Calu3 (cell line): ENCODE measurements at regions of chr5 and their contacts with region 1.

Region 1: GRCh38 chr5:172777881-172778814 is 7.2 kb upstream of the DUSP1 start:
- DNase-seq: peak; percentile 90
- H3K4me3 Mint-ChIP-seq: peak overlapping the region; percentile 68
- H3K27ac Mint-ChIP-seq: peak overlapping the region; percentile 98
- H3K4me1 Mint-ChIP-seq: peaks cover 51% of the 10 kb centered on the region
- H3K27me3 Mint-ChIP-seq: no peaks in the 10 kb centered on the region
- CTCF ChIP-seq: no peak

Region 2: DNA sequence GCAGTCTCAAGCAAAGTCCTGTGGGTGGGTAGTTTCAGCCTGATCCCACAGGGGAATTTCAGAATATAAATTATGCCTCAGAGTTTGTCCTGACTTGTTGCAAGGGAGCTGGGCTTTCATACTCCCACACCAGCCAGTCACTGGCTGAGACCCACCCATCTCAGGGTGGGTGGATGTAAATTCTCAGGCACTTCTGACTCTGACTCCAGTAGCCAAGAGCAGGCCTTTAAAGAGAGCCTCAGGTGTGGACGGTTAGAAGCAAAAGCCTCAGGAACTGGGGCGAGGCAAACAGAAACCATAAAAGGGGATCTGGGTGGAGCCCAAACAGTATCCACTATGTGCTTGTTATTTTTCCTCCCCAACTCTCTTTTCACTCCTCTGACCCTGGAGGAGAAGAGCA is 743.1 kb before region 1 on chr5:
- CTCF ChIA-PET with region 1: no interaction called
- intact Hi-C with region 1: no loop called
- DNase-seq: no peak
- H3K4me3 Mint-ChIP-seq: no peak overlapping the region
- H3K27ac Mint-ChIP-seq: no peak overlapping the region
- H3K4me1 Mint-ChIP-seq: peaks cover 4% of the 10 kb centered on the region
- H3K27me3 Mint-ChIP-seq: peaks cover 16% of the 10 kb centered on the region
- CTCF ChIP-seq: no peak

Region 3: DNA sequence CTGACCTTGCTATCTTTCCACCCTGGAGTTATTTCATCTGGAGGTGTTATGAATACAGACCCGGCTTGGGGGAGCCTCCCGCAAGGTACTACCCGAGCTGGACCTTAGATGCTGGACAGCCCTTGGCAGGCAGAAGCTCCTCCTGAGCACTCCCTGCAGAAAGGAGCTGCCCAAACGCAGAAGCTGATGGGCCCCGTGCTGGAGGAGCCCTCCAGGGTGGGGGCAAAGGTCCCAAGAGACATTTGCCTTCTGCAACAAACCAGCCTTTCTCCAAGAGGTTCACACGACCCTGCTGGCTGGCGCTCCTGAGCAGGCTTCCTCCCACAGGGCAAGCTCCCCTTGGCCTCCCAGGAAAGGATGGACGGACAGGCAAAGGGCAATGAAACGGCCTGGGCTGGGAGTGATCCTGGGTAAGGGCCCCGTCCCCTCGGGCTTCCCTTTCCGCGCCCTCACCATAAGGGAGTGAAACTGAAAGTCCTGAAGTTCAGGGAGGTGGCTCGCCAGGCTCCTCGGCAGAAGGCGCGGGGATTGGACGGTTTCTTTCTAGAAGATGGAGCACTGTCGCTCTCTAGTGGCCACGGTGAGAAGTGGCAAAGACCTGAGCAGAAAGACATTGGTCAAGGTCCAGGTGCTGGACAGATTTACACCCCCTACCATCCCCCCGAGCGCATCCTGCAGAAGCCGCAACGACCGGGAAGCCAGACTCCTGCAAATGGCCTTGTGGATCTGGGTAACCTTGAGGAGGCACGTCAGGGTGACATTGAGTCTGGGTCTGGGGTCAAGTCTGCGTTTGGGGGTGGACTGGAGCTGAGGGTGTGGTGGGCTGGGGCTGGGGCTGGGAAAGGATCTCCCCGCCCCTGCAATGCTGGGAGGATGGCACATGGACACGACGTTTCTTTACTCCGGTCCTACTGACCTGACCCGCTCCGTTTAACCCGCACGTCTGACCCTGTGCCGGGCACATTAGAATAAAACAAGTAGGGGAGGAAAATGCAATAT is 80.7 kb before region 1 on chr5:
- CTCF ChIA-PET with region 1: no interaction called
- intact Hi-C with region 1: no loop called
- DNase-seq: peak; percentile 92
- H3K4me3 Mint-ChIP-seq: peak overlapping the region; percentile 77
- H3K27ac Mint-ChIP-seq: peak overlapping the region; percentile 55
- H3K4me1 Mint-ChIP-seq: peaks cover 10% of the 10 kb centered on the region
- H3K27me3 Mint-ChIP-seq: peaks cover 36% of the 10 kb centered on the region
- CTCF ChIP-seq: peak; percentile 86

Region 4: GRCh38 chr5:172733131-172733973 is 44.8 kb before region 1 on chr5:
- CTCF ChIA-PET with region 1: no interaction called
- intact Hi-C with region 1: no loop called
- DNase-seq: peak; percentile 64
- H3K4me3 Mint-ChIP-seq: peak overlapping the region; percentile 1
- H3K27ac Mint-ChIP-seq: peak overlapping the region; percentile 78
- H3K4me1 Mint-ChIP-seq: peaks cover 38% of the 10 kb centered on the region
- H3K27me3 Mint-ChIP-seq: no peaks in the 10 kb centered on the region
- CTCF ChIP-seq: no peak

Region 5: GRCh38 chr5:172798422-172799200 is 20.5 kb after region 1 on chr5:
- CTCF ChIA-PET with region 1: interaction called, 33 read pairs
- intact Hi-C with region 1: loop called (anchors 1 kb)
- DNase-seq: no peak
- H3K4me3 Mint-ChIP-seq: peak overlapping the region; percentile 47
- H3K27ac Mint-ChIP-seq: peak overlapping the region; percentile 69
- H3K4me1 Mint-ChIP-seq: peaks cover 61% of the 10 kb centered on the region
- H3K27me3 Mint-ChIP-seq: no peaks in the 10 kb centered on the region
- CTCF ChIP-seq: no peak

Region 6: GRCh38 chr5:172806897-172807672 is 28.9 kb after region 1 on chr5:
- CTCF ChIA-PET with region 1: interaction called, 27 read pairs
- intact Hi-C with region 1: loop called (anchors 2 kb)
- DNase-seq: peak; percentile 95
- H3K4me3 Mint-ChIP-seq: peak overlapping the region; percentile 68
- H3K27ac Mint-ChIP-seq: peak overlapping the region; percentile 100
- H3K4me1 Mint-ChIP-seq: peaks cover 33% of the 10 kb centered on the region
- H3K27me3 Mint-ChIP-seq: no peaks in the 10 kb centered on the region
- CTCF ChIP-seq: no peak

Region 7: GRCh38 chr5:172849606-172850453 is 71.7 kb after region 1 on chr5:
- CTCF ChIA-PET with region 1: interaction called, 13 read pairs
- intact Hi-C with region 1: no loop called
- DNase-seq: peak; percentile 30
- H3K4me3 Mint-ChIP-seq: no peak overlapping the region
- H3K27ac Mint-ChIP-seq: peak overlapping the region; percentile 52
- H3K4me1 Mint-ChIP-seq: peaks cover 39% of the 10 kb centered on the region
- H3K27me3 Mint-ChIP-seq: no peaks in the 10 kb centered on the region
- CTCF ChIP-seq: no peak